Posterior vena cava (tissue), 2 donors: ENCODE measurements at regions of chr12 and their contacts with region 1.

Region 1: GRCh38 chr12:47862881-47863280 is 41.9 kb downstream of the VDR start:
- DNase-seq: no peak

Region 2: GRCh38 chr12:47904713-47905310 is 41.9 kb after region 1 on chr12 and contains the start of gene VDR:
- intact Hi-C with region 1: loop called in 1 of 2 experiments (anchors 1 kb)
- DNase-seq: peak; percentile 92
- total RNA-seq, gene VDR: 9.6 to 10.2 TPM